ENCODE measurements at regions of chr12 and their contacts with region 1.

Region 1: DNA sequence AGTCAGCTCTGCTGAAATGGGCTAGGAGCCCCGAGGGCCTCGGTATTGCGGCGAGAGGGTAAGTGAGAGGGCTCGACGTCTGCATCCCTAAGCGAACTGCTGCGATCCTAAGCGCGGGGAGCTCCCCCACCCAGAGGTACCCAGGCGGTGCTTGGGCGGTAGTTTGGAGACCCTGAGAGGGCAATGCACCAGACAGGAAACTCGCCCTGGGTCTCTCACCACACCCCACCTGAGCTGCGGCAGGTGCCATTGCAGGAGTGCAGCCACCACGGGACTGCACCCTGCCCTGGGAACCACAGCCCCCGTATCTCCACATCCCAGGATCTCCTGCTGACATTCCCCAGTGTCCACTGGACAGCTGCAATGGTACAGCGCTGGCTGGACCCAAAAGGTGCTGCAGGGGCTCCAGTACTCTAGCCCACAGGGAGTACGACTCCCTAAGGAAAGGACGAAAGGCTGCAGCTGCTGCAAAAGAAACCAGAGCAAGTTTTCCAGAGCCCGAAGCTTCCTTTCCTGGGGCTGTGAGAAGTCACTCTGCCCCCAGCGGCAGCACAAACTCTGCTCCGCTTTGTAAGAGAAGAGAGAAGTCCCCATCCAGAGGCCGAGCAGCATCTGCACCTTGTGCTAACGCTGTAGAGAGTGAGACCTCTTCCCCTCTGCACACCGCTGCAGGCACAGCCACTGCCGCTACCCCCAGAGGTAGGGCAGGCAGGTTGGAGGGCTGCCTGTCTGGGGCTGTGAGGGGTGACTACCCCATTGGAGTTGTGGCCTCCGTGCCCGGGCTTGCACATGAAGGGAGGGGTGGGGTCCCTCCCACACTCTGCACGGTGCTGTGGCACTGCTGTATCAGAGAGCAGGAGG is 31.1 kb upstream of the MON2 start:
- DNase-seq: peak; percentile 63 to 70
- H3K4me3 ChIP-seq: peak overlapping the region; percentile 54
- H3K4me3 Mint-ChIP-seq: peak overlapping the region; percentile 93
- H3K27ac Mint-ChIP-seq: peak overlapping the region; percentile 39
- H3K4me1 ChIP-seq: no peaks in the 10 kb centered on the region
- H3K4me1 Mint-ChIP-seq: no peaks in the 10 kb centered on the region
- H3K27me3 ChIP-seq: no peaks in the 10 kb centered on the region
- H3K27me3 Mint-ChIP-seq: peaks cover 10% of the 10 kb centered on the region
- CTCF ChIP-seq: peak in 1 of 2 experiments; percentile 74

Region 2: DNA sequence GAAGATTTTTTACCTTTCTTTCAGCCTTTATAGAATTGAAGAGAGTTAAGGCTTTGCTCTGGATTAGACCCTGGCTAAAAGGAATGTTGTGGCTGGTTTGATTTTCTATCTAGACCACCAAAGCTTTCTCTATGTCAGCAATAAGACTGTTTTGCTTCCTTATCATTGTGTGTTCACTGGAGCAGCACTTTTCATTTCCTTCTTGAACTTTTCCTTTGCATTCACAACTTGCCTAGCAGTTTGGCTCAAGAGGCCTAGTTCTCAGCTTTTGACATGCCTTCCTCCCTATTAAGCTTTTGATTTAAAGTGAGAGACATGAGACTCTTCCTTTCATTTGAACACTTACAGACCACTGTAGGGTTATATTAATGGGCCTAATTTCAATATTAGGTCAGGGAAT is 239.4 kb before region 1 on chr12:
- CTCF ChIA-PET with region 1: no interaction called
- POLR2A ChIA-PET with region 1: no interaction called
- intact Hi-C with region 1: no loop called
- DNase-seq: no peak
- H3K4me3 ChIP-seq: no peak overlapping the region
- H3K4me3 Mint-ChIP-seq: no peak overlapping the region
- H3K27ac Mint-ChIP-seq: no peak overlapping the region
- H3K4me1 ChIP-seq: no peaks in the 10 kb centered on the region
- H3K4me1 Mint-ChIP-seq: no peaks in the 10 kb centered on the region
- H3K27me3 ChIP-seq: no peaks in the 10 kb centered on the region; the same call in 1 of the 2 replicates
- H3K27me3 Mint-ChIP-seq: peaks cover 7% of the 10 kb centered on the region
- CTCF ChIP-seq: no peak

Region 3: DNA sequence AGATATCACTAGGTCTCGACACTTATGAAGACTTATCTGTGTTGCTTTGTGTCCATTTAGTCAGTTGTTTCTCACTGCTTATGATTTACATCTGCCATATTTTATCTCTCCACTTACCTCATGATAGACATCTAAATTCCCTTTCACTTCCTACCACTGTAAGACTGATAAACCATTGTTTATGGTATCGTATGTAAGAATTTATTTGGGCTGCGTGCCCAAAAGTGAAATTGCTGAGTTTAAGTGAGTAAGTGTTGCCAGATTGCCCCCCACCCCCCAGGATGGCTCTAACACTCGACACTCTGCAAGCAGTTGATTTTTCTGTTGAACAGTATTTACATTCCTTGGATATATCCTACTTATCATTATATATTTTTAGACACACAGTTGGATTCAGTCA is 38.8 kb before region 1 on chr12:
- CTCF ChIA-PET with region 1: no interaction called
- POLR2A ChIA-PET with region 1: no interaction called
- intact Hi-C with region 1: no loop called
- DNase-seq: no peak
- H3K4me3 ChIP-seq: no peak overlapping the region
- H3K4me3 Mint-ChIP-seq: no peak overlapping the region
- H3K27ac Mint-ChIP-seq: no peak overlapping the region
- H3K4me1 ChIP-seq: no peaks in the 10 kb centered on the region
- H3K4me1 Mint-ChIP-seq: no peaks in the 10 kb centered on the region
- H3K27me3 ChIP-seq: no peaks in the 10 kb centered on the region
- H3K27me3 Mint-ChIP-seq: no peaks in the 10 kb centered on the region
- CTCF ChIP-seq: no peak

Region 4: GRCh38 chr12:62466594-62467491 is 31.3 kb after region 1 on chr12 and contains the start of gene MON2:
- CTCF ChIA-PET with region 1: interaction called, 10 read pairs
- POLR2A ChIA-PET with region 1: interaction called, 3 read pairs
- intact Hi-C with region 1: loop called (anchors 1 kb)
- DNase-seq: peak; percentile 81 to 90
- H3K4me3 ChIP-seq: peak within 1 kb of the TSS; percentile 82
- H3K4me3 Mint-ChIP-seq: peak within 1 kb of the TSS; percentile 92
- H3K27ac Mint-ChIP-seq: peak within 1 kb of the TSS; percentile 75
- H3K4me1 ChIP-seq: no peaks in the 10 kb centered on the region
- H3K4me1 Mint-ChIP-seq: no peaks in the 10 kb centered on the region
- H3K27me3 ChIP-seq: no peaks in the 10 kb centered on the region
- H3K27me3 Mint-ChIP-seq: no peaks in the 10 kb centered on the region
- CTCF ChIP-seq: no peak
- total RNA-seq, gene MON2: 30.7 and 30.8 TPM in 2 replicates

Region 5: DNA sequence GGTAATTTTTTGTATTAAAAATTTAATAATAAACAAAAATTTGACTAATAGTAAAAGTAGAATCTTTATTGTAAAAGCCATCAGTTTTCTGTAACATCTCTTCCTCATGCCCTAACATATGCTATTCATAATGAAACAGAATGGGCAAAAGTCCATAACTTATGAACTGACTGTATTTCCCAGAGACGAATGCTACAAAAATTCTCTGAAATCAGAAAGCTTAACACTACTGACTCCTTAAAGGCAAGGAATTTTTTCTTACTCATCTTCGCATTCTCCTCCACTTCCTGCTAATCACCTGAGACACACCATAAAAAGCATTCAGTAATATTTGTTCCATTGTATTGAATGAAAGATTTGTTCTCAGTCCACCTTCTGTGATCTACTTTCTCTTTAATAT is 48.7 kb after region 1 on chr12:
- CTCF ChIA-PET with region 1: no interaction called
- POLR2A ChIA-PET with region 1: no interaction called
- intact Hi-C with region 1: no loop called
- DNase-seq: no peak
- H3K4me3 ChIP-seq: no peak overlapping the region
- H3K4me3 Mint-ChIP-seq: no peak overlapping the region
- H3K27ac Mint-ChIP-seq: no peak overlapping the region
- H3K4me1 ChIP-seq: no peaks in the 10 kb centered on the region
- H3K4me1 Mint-ChIP-seq: no peaks in the 10 kb centered on the region
- H3K27me3 ChIP-seq: no peaks in the 10 kb centered on the region
- H3K27me3 Mint-ChIP-seq: no peaks in the 10 kb centered on the region
- CTCF ChIP-seq: no peak

Region 6: GRCh38 chr12:62525271-62525670 is 89.7 kb after region 1 on chr12:
- CTCF ChIA-PET with region 1: no interaction called
- POLR2A ChIA-PET with region 1: no interaction called
- intact Hi-C with region 1: loop called (anchors 2 kb)
- DNase-seq: no peak
- H3K4me3 ChIP-seq: no peak overlapping the region
- H3K4me3 Mint-ChIP-seq: no peak overlapping the region
- H3K27ac Mint-ChIP-seq: no peak overlapping the region
- H3K4me1 ChIP-seq: peaks cover 12% of the 10 kb centered on the region; the same call in 1 of the 2 replicates
- H3K4me1 Mint-ChIP-seq: no peaks in the 10 kb centered on the region
- H3K27me3 ChIP-seq: no peaks in the 10 kb centered on the region
- H3K27me3 Mint-ChIP-seq: no peaks in the 10 kb centered on the region
- CTCF ChIP-seq: no peak

Region 7: DNA sequence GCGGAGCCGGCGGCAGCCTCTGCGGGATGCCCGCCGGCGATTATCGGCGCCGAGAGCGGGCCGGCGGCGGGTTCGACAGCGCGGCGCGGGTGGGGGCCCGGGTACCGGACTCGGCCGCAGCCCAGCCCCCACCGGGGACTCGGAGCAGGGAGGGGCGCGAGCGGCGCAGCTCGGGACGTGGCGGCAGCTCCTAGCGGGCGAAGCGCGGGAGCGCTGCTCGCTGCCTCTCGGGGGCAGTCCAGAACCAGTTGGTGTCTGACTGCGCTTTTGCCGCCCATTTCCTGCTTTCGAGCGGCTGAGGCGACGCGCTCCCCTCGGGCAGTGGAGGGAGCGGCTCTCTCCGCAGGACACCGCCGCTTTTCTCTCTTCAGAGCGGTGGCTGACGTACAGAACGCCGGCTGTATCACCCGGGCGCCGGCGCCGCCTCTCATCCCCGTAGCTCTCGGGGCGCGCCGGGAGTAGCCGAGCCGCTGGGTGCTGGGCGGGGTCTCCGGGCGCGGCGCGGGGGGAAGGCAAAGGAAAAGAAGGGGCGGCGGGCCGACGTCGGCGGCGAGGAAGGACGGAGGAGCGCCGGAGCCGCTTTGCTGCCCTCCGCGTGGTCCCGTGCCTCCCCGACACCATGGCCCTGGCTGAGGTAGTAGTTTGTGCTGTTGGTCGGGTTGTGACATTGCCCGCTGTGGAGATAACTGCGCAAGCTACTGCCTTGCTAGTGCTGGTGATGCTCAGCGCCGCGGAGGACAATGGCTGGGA is 167.7 kb after region 1 on chr12:
- CTCF ChIA-PET with region 1: interaction called, 4 read pairs
- POLR2A ChIA-PET with region 1: no interaction called
- intact Hi-C with region 1: loop called (anchors 5 kb)
- DNase-seq: peak; percentile 85 to 91
- H3K4me3 ChIP-seq: peak overlapping the region; percentile 93
- H3K4me3 Mint-ChIP-seq: peak overlapping the region; percentile 95
- H3K27ac Mint-ChIP-seq: peak overlapping the region; percentile 100
- H3K4me1 ChIP-seq: peaks cover 23% of the 10 kb centered on the region
- H3K4me1 Mint-ChIP-seq: peaks cover 9% of the 10 kb centered on the region
- H3K27me3 ChIP-seq: no peaks in the 10 kb centered on the region
- H3K27me3 Mint-ChIP-seq: no peaks in the 10 kb centered on the region
- CTCF ChIP-seq: peak in 1 of 2 experiments; percentile 58

Region 8: GRCh38 chr12:62862259-62862881 is 426.8 kb after region 1 on chr12:
- CTCF ChIA-PET with region 1: no interaction called
- POLR2A ChIA-PET with region 1: no interaction called
- intact Hi-C with region 1: no loop called
- DNase-seq: no peak
- H3K4me3 ChIP-seq: no peak overlapping the region
- H3K4me3 Mint-ChIP-seq: no peak overlapping the region
- H3K27ac Mint-ChIP-seq: peak overlapping the region; percentile 36
- H3K4me1 ChIP-seq: peaks cover 68% of the 10 kb centered on the region
- H3K4me1 Mint-ChIP-seq: peaks cover 52% of the 10 kb centered on the region
- H3K27me3 ChIP-seq: no peaks in the 10 kb centered on the region
- H3K27me3 Mint-ChIP-seq: no peaks in the 10 kb centered on the region
- CTCF ChIP-seq: no peak

Region 9: GRCh38 chr12:63068857-63069442 is 633.4 kb after region 1 on chr12:
- CTCF ChIA-PET with region 1: interaction called, 3 read pairs
- POLR2A ChIA-PET with region 1: no interaction called
- intact Hi-C with region 1: loop called (anchors 1 kb)
- DNase-seq: peak in 1 of 2 experiments; percentile 39
- H3K4me3 ChIP-seq: no peak overlapping the region
- H3K4me3 Mint-ChIP-seq: no peak overlapping the region
- H3K27ac Mint-ChIP-seq: no peak overlapping the region
- H3K4me1 ChIP-seq: peaks cover 26% of the 10 kb centered on the region
- H3K4me1 Mint-ChIP-seq: peaks cover 33% of the 10 kb centered on the region
- H3K27me3 ChIP-seq: no peaks in the 10 kb centered on the region
- H3K27me3 Mint-ChIP-seq: no peaks in the 10 kb centered on the region
- CTCF ChIP-seq: peak; percentile 61 to 64

Measured in Caco-2 (cell line).